ENCODE measurements at regions of chr5 and their contacts with region 1.

Region 1: GRCh38 chr5:116068028-116068632 is 16.7 kb upstream of the COMMD10 start:
- DNase-seq: no peak
- H3K4me3 ChIP-seq: no peak overlapping the region
- H3K27ac ChIP-seq: no peak overlapping the region
- H3K4me1 ChIP-seq: no peaks in the 10 kb centered on the region
- H3K27me3 ChIP-seq: peaks cover 19% of the 10 kb centered on the region
- CTCF ChIP-seq: peak; percentile 70 to 89 (median 86)
- EP300 ChIP-seq: no peak
- POLR2A ChIP-seq: no peak

Region 2: DNA sequence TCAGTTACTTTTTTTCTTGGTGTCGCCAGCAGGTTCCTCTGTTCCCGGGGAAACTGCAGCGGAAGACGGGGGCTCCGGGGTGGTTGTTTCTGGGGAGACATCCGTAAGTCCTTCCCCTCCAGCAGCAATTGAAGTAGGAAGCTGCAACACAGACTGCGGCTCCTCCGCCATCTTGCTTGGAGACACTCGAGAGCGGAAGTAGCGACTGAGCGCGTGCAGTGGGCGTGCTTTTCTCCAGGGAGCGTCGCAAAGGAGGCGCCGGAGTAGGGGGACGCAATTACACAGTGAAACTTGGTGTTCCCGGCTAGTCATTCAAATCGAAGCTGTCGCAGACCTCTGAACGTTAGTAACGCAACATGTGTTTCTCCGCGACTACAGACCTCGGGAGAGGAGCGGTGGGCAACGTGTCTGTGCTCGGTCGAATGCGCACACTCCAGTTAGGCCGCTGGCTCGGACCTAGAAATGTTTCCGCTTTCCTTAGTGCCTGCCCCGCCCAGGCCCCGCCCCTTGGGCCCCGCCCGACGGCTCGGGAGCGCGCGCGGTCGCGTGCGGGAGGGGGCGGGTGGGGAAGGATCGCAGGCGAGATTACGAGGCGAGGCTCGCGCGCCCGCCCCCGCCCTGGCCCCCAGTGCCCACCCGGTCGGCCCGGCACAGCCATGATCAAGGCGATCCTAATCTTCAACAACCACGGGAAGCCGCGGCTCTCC is 226.6 kb before region 1 on chr5 and contains the starts of genes AP3S1 and ATG12:
- in situ Hi-C with region 1: loop called in 1 of 4 experiments (anchors 25 kb)
- intact Hi-C with region 1: no loop called
- DNase-seq: peak; percentile 93
- H3K4me3 ChIP-seq: peak within 1 kb of the TSS; percentile 63 to 85 (median 78)
- H3K27ac ChIP-seq: peak within 1 kb of the TSS; percentile 92 to 94 (median 94)
- H3K4me1 ChIP-seq: peaks cover 28 to 56% (median 34%) of the 10 kb centered on the region in 4 donors
- H3K27me3 ChIP-seq: no peaks in the 10 kb centered on the region
- CTCF ChIP-seq: no peak
- EP300 ChIP-seq: no peak
- POLR2A ChIP-seq: peak; percentile 94
- total RNA-seq, gene AP3S1: 54.2 to 258 (median 65.7) TPM
- total RNA-seq, gene ATG12: 18.7 to 51.3 (median 31.4) TPM